ENCODE measurements at regions of chr17 and their contacts with region 1.

Region 1: DNA sequence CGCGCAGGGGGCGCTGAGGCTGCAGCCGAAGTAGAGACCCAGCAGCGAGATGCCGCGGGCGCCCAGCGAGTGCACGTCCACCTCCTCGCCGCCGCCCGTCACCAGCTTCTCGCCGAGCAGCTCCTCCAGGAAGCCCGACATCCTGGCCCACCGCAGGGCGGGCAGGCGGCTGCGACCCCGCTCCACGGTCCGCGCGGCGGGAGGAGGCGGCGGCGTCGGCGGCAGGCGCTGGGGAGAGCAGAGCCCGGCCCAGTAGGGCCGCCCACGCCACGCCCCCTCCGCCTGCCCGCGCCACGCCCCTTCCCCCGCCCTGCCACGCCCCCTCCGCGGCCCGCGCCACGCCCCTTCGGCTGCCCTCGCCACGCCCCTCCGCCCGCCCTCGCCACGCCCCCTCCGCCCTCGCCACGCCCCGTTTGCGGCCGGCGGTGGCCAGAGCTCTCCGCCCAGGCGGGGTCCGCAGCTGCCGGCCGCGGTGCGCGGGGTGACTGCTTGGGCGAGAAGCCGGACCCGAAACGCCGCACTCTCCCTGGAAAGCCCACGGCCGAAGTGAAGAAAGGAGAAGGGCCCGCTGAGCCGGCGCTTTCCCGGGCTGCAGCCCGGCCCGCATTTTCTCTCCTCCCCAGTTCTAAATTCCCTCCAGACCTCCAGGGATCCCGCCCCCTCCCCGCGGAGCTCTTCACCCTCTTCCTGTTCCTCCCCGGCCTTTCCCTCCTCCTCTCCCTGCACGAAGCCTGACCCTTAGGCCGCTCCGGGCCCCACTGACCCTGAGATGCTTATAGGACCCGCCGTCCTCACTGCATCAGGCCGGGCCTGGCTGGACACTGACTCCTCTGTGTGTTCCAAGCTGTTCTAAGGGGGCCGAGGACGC is at the start of gene NXN:
- DNase-seq: peak; percentile 79
- H3K4me3 Mint-ChIP-seq: peak within 1 kb of the TSS; percentile 78
- H3K27ac Mint-ChIP-seq: no peak within 1 kb of the TSS
- H3K4me1 Mint-ChIP-seq: peaks cover 11% of the 10 kb centered on the region
- H3K27me3 Mint-ChIP-seq: peaks cover 32% of the 10 kb centered on the region
- total RNA-seq, gene NXN: 0.43 and 0.48 TPM in 2 replicates

Region 2: GRCh38 chr17:596763-597644 is 382.8 kb before region 1 on chr17:
- intact Hi-C with region 1: no loop called
- DNase-seq: no peak
- H3K4me3 Mint-ChIP-seq: no peak overlapping the region
- H3K27ac Mint-ChIP-seq: no peak overlapping the region
- H3K4me1 Mint-ChIP-seq: peaks cover 2% of the 10 kb centered on the region
- H3K27me3 Mint-ChIP-seq: no peaks in the 10 kb centered on the region

Region 3: GRCh38 chr17:794876-795275 is 184.9 kb before region 1 on chr17:
- intact Hi-C with region 1: loop called (anchors 1 kb)
- DNase-seq: no peak
- H3K4me3 Mint-ChIP-seq: no peak overlapping the region
- H3K27ac Mint-ChIP-seq: no peak overlapping the region
- H3K4me1 Mint-ChIP-seq: peaks cover 4% of the 10 kb centered on the region
- H3K27me3 Mint-ChIP-seq: no peaks in the 10 kb centered on the region

Region 4: GRCh38 chr17:879549-880442 is 100.0 kb before region 1 on chr17:
- intact Hi-C with region 1: loop called (anchors 5 kb)
- DNase-seq: peak; percentile 48
- H3K4me3 Mint-ChIP-seq: no peak overlapping the region
- H3K27ac Mint-ChIP-seq: no peak overlapping the region
- H3K4me1 Mint-ChIP-seq: peaks cover 12% of the 10 kb centered on the region
- H3K27me3 Mint-ChIP-seq: peaks cover 17% of the 10 kb centered on the region

Region 5: GRCh38 chr17:933312-934083 is 46.3 kb before region 1 on chr17:
- intact Hi-C with region 1: no loop called
- DNase-seq: no peak
- H3K4me3 Mint-ChIP-seq: no peak overlapping the region
- H3K27ac Mint-ChIP-seq: no peak overlapping the region
- H3K4me1 Mint-ChIP-seq: no peaks in the 10 kb centered on the region
- H3K27me3 Mint-ChIP-seq: no peaks in the 10 kb centered on the region

Region 6: DNA sequence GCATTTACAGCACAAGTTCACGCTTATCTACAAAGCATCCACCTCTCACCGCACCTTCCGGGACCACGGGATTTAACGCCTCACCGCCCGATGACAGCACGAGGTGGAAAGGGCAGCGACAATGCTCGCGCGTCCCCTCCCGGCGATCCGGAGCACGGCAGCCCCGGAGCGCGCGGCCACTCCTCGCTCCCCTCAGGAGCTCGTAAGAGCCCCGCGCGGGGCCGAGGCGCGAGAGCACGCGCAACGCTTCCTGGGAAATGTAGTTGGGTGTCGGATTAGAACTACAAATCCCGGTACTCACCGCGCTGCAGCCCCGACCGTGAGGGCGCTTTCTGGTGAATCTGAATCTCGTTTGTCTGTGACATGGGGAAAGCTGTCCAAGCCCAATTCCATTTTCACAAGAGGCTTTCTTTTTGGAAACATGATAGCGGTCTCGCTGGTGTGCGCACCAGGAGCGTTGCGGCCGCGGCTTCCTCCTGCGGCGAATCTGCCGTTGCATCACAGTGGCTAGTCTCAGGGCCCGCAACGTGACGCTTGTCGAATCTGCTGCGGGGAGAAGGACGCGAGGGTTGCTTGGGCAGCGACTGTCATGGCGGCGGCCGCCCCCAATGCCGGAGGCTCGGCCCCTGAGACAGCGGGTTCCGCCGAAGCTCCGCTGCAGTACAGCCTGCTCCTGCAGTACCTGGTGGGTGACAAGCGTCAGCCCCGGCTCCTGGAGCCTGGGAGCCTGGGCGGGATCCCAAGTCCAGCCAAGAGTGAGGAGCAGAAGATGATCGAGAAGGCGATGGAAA is 17.0 kb after region 1 on chr17 and contains the start of gene TIMM22:
- intact Hi-C with region 1: loop called (anchors 1 kb)
- DNase-seq: peak; percentile 91
- H3K4me3 Mint-ChIP-seq: peak within 1 kb of the TSS; percentile 95
- H3K27ac Mint-ChIP-seq: peak within 1 kb of the TSS; percentile 95
- H3K4me1 Mint-ChIP-seq: peaks cover 11% of the 10 kb centered on the region
- H3K27me3 Mint-ChIP-seq: no peaks in the 10 kb centered on the region
- total RNA-seq, gene TIMM22: 13.6 and 15.0 TPM in 2 replicates

Region 7: DNA sequence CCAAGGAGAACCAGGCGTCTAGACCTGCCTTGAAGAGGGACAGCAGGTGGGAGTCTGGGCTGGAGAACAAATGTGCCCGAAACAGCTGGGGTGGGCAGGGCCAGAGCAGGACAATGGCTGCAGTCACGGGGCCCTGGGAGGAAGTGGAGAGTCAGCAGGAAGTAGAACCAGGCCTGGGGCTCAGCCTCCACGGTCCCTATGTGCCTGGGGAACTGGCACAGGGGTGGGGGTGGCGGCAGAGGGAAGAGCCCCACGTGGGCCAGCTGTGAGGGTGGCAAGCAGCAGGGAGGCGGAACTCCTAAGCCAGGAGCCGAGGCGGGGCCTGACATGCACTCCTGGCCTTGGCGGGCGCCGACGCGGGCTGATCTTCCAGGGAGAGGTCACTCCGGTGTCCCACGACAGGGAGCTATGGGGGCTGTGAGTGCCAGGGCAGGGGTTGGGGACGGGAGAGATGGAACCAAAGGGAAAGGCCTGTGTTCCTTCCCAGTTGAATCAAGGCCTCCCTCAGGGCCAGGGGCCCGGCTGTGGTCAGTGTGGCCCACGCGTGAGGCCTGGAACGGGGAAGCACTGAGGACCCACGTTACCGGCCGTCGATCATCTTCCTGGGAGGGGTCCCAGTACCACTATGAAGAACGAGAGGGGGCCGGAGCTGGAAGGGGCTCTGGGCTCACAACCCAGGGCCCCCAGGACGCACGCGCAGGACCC is 59.9 kb after region 1 on chr17:
- intact Hi-C with region 1: no loop called
- DNase-seq: no peak
- H3K4me3 Mint-ChIP-seq: no peak overlapping the region
- H3K27ac Mint-ChIP-seq: no peak overlapping the region
- H3K4me1 Mint-ChIP-seq: no peaks in the 10 kb centered on the region
- H3K27me3 Mint-ChIP-seq: no peaks in the 10 kb centered on the region

Measured in activated T-helper 2 cell treated with anti-CD3 and anti-CD28 coated beads, Interferon-gamma antibody, Interleukin-2, Interleukin-4, amounts not matched to agents 10 μg/mL and 5 μg/mL and 100 μg/mL, durations not matched to agents 14 hours and 24 hours and 36 hours (primary cell).